ENCODE measurements at regions of chr10 and their contacts with region 1.

Region 1: DNA sequence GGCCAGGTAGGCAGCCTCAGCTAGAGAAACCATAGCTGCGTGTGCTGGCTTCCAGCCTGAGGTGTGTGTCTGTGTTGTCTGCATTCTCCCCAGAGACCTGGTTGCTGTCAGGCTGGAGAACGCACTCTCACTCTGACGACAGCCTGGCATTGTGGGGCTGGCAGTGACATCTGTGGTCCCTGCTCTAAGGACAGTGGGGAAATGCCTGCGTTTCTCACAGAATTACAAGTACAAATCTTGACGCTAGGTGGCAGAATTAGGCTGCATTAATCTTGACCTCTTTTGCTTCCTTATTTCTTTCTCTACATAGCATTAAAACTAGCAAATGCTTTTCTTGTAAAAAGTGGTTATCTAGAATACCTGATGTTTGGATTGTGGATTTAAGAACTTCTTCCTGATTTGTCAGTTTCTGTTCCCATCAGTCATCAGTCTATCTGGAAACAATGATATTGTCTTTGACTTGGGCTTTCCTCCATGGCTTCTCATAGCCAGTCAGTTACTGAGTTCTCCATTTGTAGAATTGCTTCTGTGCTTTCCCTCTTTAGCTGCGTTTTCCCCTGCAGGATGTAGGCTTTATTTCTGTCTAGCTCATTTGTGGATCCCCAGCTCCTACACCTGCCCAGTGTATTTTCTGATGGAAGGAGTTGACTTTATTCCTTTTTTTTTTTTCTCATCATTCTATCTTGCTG is 86.0 kb downstream of the FANK1 start:
- DNase-seq: no peak
- ATAC-seq: peak in 1 of 4 donors; percentile 46
- H3K4me3 ChIP-seq: no peak overlapping the region
- H3K27ac ChIP-seq: no peak overlapping the region
- H3K4me1 ChIP-seq: no peaks in the 10 kb centered on the region
- H3K27me3 ChIP-seq: no peaks in the 10 kb centered on the region
- CTCF ChIP-seq: peak; percentile 62

Region 2: DNA sequence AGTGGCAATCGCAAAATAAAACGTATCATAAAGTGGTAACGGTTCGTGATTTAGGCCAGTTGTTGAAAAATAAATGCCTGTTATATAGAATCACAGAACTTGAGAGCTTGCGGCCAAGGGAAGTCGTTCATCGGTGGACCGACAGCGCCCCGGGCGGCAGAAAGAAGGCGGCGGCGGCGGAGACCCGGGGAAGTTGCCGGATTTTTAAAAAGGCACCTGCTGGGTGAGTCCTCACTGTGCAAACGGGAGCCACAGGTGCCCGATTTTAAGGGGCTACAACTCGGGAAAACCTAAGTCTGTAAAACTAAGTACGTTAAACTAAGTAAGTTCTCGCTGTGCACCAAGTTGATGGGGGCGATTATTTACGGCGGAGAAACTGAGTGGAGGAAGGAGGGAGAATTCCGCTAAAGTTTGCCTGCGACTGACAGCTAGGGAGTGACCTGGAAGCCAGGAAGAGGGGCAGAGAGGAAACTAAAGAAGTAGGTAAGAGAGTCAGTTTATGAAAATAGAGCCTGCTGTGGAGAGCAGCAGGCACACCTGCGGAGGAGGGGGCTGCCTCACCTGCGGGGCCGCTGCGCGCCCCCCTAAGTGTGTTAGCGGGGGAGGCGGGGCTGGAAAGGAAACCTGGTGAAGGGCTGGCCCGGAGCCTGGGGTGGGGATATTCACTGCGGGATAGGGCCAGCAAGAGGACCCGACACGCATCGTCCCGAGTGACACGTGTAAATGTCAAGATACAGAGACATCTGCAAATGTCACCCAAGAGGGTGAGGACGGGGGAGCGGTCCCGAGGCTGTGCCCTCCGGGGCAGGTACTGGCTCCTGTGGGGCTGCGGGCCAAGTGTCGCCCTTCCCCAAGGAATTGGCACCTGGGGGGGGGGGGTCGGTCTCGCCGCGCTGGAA is 404.9 kb after region 1 on chr10:
- intact Hi-C with region 1: loop called in 1 of 2 experiments (anchors 5 kb)
- DNase-seq: peak; percentile 55 to 58
- ATAC-seq: peak in 1 of 4 donors; percentile 48
- H3K4me3 ChIP-seq: peak overlapping the region; percentile 56
- H3K27ac ChIP-seq: no peak overlapping the region
- H3K4me1 ChIP-seq: no peaks in the 10 kb centered on the region
- H3K27me3 ChIP-seq: peaks cover 0 to 45% (median 20%) of the 10 kb centered on the region in 3 donors
- CTCF ChIP-seq: peak; percentile 47

Region 3: DNA sequence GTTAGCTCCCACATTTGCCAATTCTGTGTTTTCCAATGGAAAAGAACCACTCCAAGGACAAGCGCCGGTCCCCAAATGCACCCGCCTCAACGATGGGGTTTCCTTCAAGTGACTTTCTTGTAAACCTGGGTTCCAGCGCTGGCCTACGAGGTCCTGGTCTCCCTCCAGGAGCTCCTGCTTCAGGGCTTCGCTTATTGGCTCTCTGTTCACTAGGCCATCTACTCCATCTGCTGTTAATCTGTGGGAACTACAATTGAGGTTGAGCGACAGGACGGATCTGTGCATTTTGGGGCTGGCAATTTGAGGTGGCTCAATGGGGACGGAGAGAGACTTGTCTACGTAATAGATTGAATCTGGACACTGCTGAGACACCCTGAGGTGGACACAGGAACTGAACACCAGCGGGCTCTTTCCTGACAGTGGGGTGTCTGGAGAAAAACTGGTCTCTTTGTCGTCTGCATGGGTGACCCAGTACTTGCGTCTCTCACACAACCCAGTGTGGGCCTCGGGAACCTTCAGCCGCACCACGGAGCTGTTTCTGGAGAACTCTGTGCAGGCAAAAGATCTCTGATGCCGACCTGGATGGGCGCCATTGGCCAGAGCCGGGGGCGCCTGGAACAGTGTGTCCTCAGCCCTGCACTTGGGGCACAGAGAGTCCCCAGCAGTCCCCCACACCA is 521.8 kb after region 1 on chr10:
- intact Hi-C with region 1: loop called (anchors 5 kb)
- DNase-seq: peak in 1 of 2 donors; percentile 19
- ATAC-seq: no peak
- H3K4me3 ChIP-seq: no peak overlapping the region
- H3K27ac ChIP-seq: no peak overlapping the region
- H3K4me1 ChIP-seq: no peaks in the 10 kb centered on the region
- H3K27me3 ChIP-seq: peaks cover 0 to 2% (median 0%) of the 10 kb centered on the region in 3 donors
- CTCF ChIP-seq: peak; percentile 54

Region 4: DNA sequence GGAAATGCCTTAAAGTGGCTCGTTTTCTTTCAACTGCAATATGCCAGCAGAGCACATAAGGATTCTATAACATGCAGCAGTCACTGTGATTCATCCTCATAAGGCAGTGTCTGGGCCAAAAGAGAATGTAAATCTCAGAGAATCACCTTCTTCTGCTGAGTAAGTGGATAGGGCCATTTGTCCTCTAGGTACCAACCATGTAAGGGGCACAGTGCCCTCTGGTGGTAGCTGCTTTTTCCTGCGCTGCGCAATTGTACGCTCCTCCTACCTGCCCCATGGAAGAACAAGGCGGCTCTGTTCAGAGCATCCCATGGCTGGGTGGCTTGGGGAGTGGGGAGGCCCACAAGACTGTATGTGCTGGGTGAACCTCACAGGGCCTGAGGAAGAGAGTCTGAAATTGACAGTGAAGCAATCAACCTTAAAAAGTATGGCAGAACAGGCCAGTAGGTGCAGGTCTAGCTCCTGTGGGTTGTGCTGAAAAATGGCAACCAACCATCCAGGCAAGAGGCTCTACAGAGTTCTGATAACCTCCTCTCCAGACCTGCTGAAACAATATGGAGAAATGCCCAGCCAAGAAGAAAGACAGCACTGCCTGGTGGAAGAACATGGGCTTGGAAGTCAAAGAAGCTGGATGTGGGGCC is 766.7 kb after region 1 on chr10:
- intact Hi-C with region 1: loop called (anchors 5 to 10 kb)
- DNase-seq: peak; percentile 51 to 77
- ATAC-seq: peak in 3 of 4 donors; percentile 38 to 67 (median 55)
- H3K4me3 ChIP-seq: no peak overlapping the region
- H3K27ac ChIP-seq: no peak overlapping the region
- H3K4me1 ChIP-seq: no peaks in the 10 kb centered on the region
- H3K27me3 ChIP-seq: peaks cover 0 to 2% (median 0%) of the 10 kb centered on the region in 3 donors
- CTCF ChIP-seq: peak; percentile 51

Region 5: GRCh38 chr10:127853868-127854768 is 1871.7 kb after region 1 on chr10:
- intact Hi-C with region 1: loop called in 1 of 2 experiments (anchors 2 kb)
- DNase-seq: peak; percentile 49 to 71
- ATAC-seq: peak; percentile 64 to 86 (median 81)
- H3K4me3 ChIP-seq: no peak overlapping the region
- H3K27ac ChIP-seq: no peak overlapping the region
- H3K4me1 ChIP-seq: no peaks in the 10 kb centered on the region
- H3K27me3 ChIP-seq: peaks cover 0 to 5% (median 4%) of the 10 kb centered on the region in 3 donors
- CTCF ChIP-seq: peak; percentile 65

Region 6: GRCh38 chr10:127863231-127863825 is 1880.9 kb after region 1 on chr10:
- intact Hi-C with region 1: loop called in 1 of 2 experiments (anchors 10 kb)
- DNase-seq: no peak
- ATAC-seq: no peak
- H3K4me3 ChIP-seq: no peak overlapping the region
- H3K27ac ChIP-seq: no peak overlapping the region
- H3K4me1 ChIP-seq: no peaks in the 10 kb centered on the region
- H3K27me3 ChIP-seq: no peaks in the 10 kb centered on the region
- CTCF ChIP-seq: no peak